ENCODE measurements at regions of chr11 and their contacts with region 1.

Region 1: DNA sequence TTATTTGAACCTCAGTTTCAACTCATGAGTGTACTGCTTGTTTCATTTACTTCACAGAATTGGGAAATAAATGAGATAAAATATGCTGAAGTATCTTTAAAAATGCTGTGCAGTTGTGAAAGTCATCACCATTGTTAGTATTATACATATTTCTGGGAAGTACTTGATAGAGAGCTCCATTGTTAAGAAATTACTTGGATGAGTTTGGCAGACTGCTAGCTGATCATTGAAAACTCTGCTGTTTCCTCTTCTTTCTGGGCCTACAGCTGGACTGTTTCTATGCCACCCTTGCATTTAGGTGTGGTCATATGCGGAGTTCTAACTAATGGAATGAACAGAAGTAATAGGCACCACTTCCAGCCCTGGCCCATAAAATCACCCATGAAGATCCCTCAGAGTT is 10.0 kb downstream of the SIK2 start:
- DNase-seq: no peak
- H3K4me3 ChIP-seq: no peak overlapping the region
- H3K27ac ChIP-seq: no peak overlapping the region
- H3K4me1 ChIP-seq: peaks cover 1% of the 10 kb centered on the region; the same call in 1 of the 2 replicates
- H3K27me3 ChIP-seq: no peaks in the 10 kb centered on the region
- CTCF ChIP-seq: no peak

Region 2: DNA sequence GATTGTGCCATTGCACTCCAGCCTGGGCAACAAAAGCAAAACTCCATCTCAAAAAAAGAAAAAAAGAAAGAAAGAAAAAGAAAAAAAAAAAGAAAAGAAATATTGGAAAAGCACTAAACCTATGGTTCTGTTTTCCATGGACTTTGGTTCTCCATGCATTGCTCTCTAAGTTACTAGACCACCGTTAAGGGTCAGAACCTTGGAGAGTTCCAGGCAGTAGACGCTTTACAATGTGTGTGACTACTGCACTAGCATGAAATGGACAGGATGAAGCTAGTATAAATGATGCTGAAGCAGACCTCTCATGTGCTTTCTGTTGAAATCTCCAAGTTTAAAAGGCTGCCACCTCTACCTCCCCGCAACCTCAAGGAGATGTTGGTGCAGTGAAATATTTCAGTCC is 53.6 kb after region 1 on chr11:
- CTCF ChIA-PET with region 1: no interaction called
- POLR2A ChIA-PET with region 1: no interaction called
- intact Hi-C with region 1: no loop called
- DNase-seq: no peak
- H3K4me3 ChIP-seq: no peak overlapping the region
- H3K27ac ChIP-seq: no peak overlapping the region
- H3K4me1 ChIP-seq: no peaks in the 10 kb centered on the region
- H3K27me3 ChIP-seq: no peaks in the 10 kb centered on the region
- CTCF ChIP-seq: no peak

Region 3: GRCh38 chr11:111688028-111688427 is 75.8 kb after region 1 on chr11:
- CTCF ChIA-PET with region 1: no interaction called
- POLR2A ChIA-PET with region 1: no interaction called
- intact Hi-C with region 1: loop called (anchors 10 kb)
- DNase-seq: no peak
- H3K4me3 ChIP-seq: no peak overlapping the region
- H3K27ac ChIP-seq: no peak overlapping the region
- H3K4me1 ChIP-seq: no peaks in the 10 kb centered on the region
- H3K27me3 ChIP-seq: no peaks in the 10 kb centered on the region
- CTCF ChIP-seq: no peak